CD8-positive, alpha-beta memory T cell (primary cell): ENCODE measurements at regions of chr19 and their contacts with region 1.

Region 1: GRCh38 chr19:12847159-12848139 is 9.1 kb downstream of the MAST1 start:
- DNase-seq: peak; percentile 73 to 84 (median 80)
- H3K4me3 ChIP-seq: no peak overlapping the region
- H3K4me3 Mint-ChIP-seq: peak overlapping the region in 5 of 7 donors; percentile 19 to 82 (median 28)
- H3K27ac ChIP-seq: no peak overlapping the region
- H3K27ac Mint-ChIP-seq: no peak overlapping the region
- H3K4me1 ChIP-seq: peaks cover 9% of the 10 kb centered on the region
- H3K4me1 Mint-ChIP-seq: peaks cover 0 to 8% (median 3%) of the 10 kb centered on the region in 3 donors
- H3K27me3 ChIP-seq: peaks cover 14% of the 10 kb centered on the region
- H3K27me3 Mint-ChIP-seq: peaks cover 23 to 48% of the 10 kb centered on the region in 2 donors

Region 2: GRCh38 chr19:12711187-12711586 is 136.3 kb before region 1 on chr19:
- CTCF ChIA-PET with region 1: interaction called, 10 read pairs
- POLR2A ChIA-PET with region 1: no interaction called
- DNase-seq: no peak
- H3K4me3 ChIP-seq: no peak overlapping the region
- H3K4me3 Mint-ChIP-seq: no peak overlapping the region
- H3K27ac ChIP-seq: no peak overlapping the region
- H3K27ac Mint-ChIP-seq: no peak overlapping the region
- H3K4me1 ChIP-seq: no peaks in the 10 kb centered on the region
- H3K4me1 Mint-ChIP-seq: no peaks in the 10 kb centered on the region
- H3K27me3 ChIP-seq: no peaks in the 10 kb centered on the region
- H3K27me3 Mint-ChIP-seq: no peaks in the 10 kb centered on the region

Region 3: GRCh38 chr19:12777217-12778016 is 70.0 kb before region 1 on chr19:
- CTCF ChIA-PET with region 1: interaction called, 24 read pairs
- POLR2A ChIA-PET with region 1: no interaction called
- DNase-seq: peak; percentile 74 to 86 (median 78)
- H3K4me3 ChIP-seq: peak overlapping the region; percentile 92
- H3K4me3 Mint-ChIP-seq: peak overlapping the region; percentile 81 to 94 (median 85)
- H3K27ac ChIP-seq: peak overlapping the region; percentile 61
- H3K27ac Mint-ChIP-seq: peak overlapping the region; percentile 78 to 98 (median 94)
- H3K4me1 ChIP-seq: peaks cover 39% of the 10 kb centered on the region
- H3K4me1 Mint-ChIP-seq: peaks cover 27 to 51% (median 30%) of the 10 kb centered on the region in 3 donors
- H3K27me3 ChIP-seq: no peaks in the 10 kb centered on the region
- H3K27me3 Mint-ChIP-seq: peaks cover 0 to 2% of the 10 kb centered on the region in 2 donors

Region 4: GRCh38 chr19:12796146-12797071 is 51.0 kb before region 1 on chr19:
- CTCF ChIA-PET with region 1: interaction called, 23 read pairs
- POLR2A ChIA-PET with region 1: no interaction called
- DNase-seq: peak; percentile 57 to 82 (median 74)
- H3K4me3 ChIP-seq: peak overlapping the region; percentile 56
- H3K4me3 Mint-ChIP-seq: peak overlapping the region; percentile 77 to 85 (median 83)
- H3K27ac ChIP-seq: peak overlapping the region; percentile 39
- H3K27ac Mint-ChIP-seq: peak overlapping the region; percentile 82 to 96 (median 93)
- H3K4me1 ChIP-seq: peaks cover 39% of the 10 kb centered on the region
- H3K4me1 Mint-ChIP-seq: peaks cover 28 to 42% (median 38%) of the 10 kb centered on the region in 3 donors
- H3K27me3 ChIP-seq: no peaks in the 10 kb centered on the region
- H3K27me3 Mint-ChIP-seq: peaks cover 0 to 25% of the 10 kb centered on the region in 2 donors

Region 5: GRCh38 chr19:12825254-12826131 is 22.0 kb before region 1 on chr19:
- CTCF ChIA-PET with region 1: interaction called, 12 read pairs
- POLR2A ChIA-PET with region 1: no interaction called
- DNase-seq: no peak
- H3K4me3 ChIP-seq: no peak overlapping the region
- H3K4me3 Mint-ChIP-seq: no peak overlapping the region
- H3K27ac ChIP-seq: no peak overlapping the region
- H3K27ac Mint-ChIP-seq: no peak overlapping the region
- H3K4me1 ChIP-seq: peaks cover 5% of the 10 kb centered on the region
- H3K4me1 Mint-ChIP-seq: peaks cover 4 to 9% (median 5%) of the 10 kb centered on the region in 3 donors
- H3K27me3 ChIP-seq: peaks cover 36% of the 10 kb centered on the region
- H3K27me3 Mint-ChIP-seq: peaks cover 47 to 51% of the 10 kb centered on the region in 2 donors

Region 6: GRCh38 chr19:12899891-12900518 is 52.6 kb after region 1 on chr19:
- CTCF ChIA-PET with region 1: no interaction called
- POLR2A ChIA-PET with region 1: no interaction called
- DNase-seq: no peak
- H3K4me3 ChIP-seq: no peak overlapping the region
- H3K4me3 Mint-ChIP-seq: no peak overlapping the region
- H3K27ac ChIP-seq: no peak overlapping the region
- H3K27ac Mint-ChIP-seq: peak overlapping the region in 3 of 8 donors; percentile 46 to 74 (median 71)
- H3K4me1 ChIP-seq: no peaks in the 10 kb centered on the region
- H3K4me1 Mint-ChIP-seq: no peaks in the 10 kb centered on the region
- H3K27me3 ChIP-seq: no peaks in the 10 kb centered on the region
- H3K27me3 Mint-ChIP-seq: no peaks in the 10 kb centered on the region